CD8-positive, alpha-beta T cell (primary cell): ENCODE measurements at regions of chr9 and their contacts with region 1.

Region 1: GRCh38 chr9:20319641-20320337 is 302.5 kb downstream of the MLLT3 start:
- DNase-seq: peak in 3 of 9 experiments; percentile 8 to 42 (median 34)
- ATAC-seq: peak; percentile 39
- H3K4me3 ChIP-seq: no peak overlapping the region
- H3K4me3 Mint-ChIP-seq: no peak overlapping the region
- H3K27ac ChIP-seq: peak overlapping the region in 1 of 2 experiments; percentile 50
- H3K27ac Mint-ChIP-seq: peak overlapping the region; percentile 82
- H3K4me1 ChIP-seq: peaks cover 58% of the 10 kb centered on the region
- H3K4me1 Mint-ChIP-seq: peaks cover 89% of the 10 kb centered on the region
- H3K27me3 ChIP-seq: no peaks in the 10 kb centered on the region
- H3K27me3 Mint-ChIP-seq: no peaks in the 10 kb centered on the region
- CTCF ChIP-seq: no peak

Region 2: GRCh38 chr9:20043035-20043434 is 276.8 kb before region 1 on chr9:
- CTCF ChIA-PET with region 1: no interaction called
- POLR2A ChIA-PET with region 1: no interaction called
- intact Hi-C with region 1: loop called in 1 of 2 experiments (anchors 5 kb)
- DNase-seq: peak in 2 of 9 experiments; percentile 15 to 44
- ATAC-seq: peak; percentile 69
- H3K4me3 ChIP-seq: peak overlapping the region; percentile 33 to 44
- H3K4me3 Mint-ChIP-seq: peak overlapping the region; percentile 80
- H3K27ac ChIP-seq: peak overlapping the region; percentile 4 to 74
- H3K27ac Mint-ChIP-seq: peak overlapping the region; percentile 84
- H3K4me1 ChIP-seq: peaks cover 22% of the 10 kb centered on the region
- H3K4me1 Mint-ChIP-seq: peaks cover 28% of the 10 kb centered on the region
- H3K27me3 ChIP-seq: no peaks in the 10 kb centered on the region
- H3K27me3 Mint-ChIP-seq: no peaks in the 10 kb centered on the region
- CTCF ChIP-seq: no peak

Region 3: GRCh38 chr9:20300430-20301115 is 19.2 kb before region 1 on chr9:
- CTCF ChIA-PET with region 1: interaction called, 3 read pairs
- POLR2A ChIA-PET with region 1: interaction called, 10 read pairs
- intact Hi-C with region 1: no loop called
- DNase-seq: no peak
- ATAC-seq: no peak
- H3K4me3 ChIP-seq: no peak overlapping the region
- H3K4me3 Mint-ChIP-seq: no peak overlapping the region
- H3K27ac ChIP-seq: no peak overlapping the region
- H3K27ac Mint-ChIP-seq: peak overlapping the region; percentile 73
- H3K4me1 ChIP-seq: peaks cover 19% of the 10 kb centered on the region
- H3K4me1 Mint-ChIP-seq: peaks cover 23% of the 10 kb centered on the region
- H3K27me3 ChIP-seq: no peaks in the 10 kb centered on the region
- H3K27me3 Mint-ChIP-seq: no peaks in the 10 kb centered on the region
- CTCF ChIP-seq: no peak

Region 4: DNA sequence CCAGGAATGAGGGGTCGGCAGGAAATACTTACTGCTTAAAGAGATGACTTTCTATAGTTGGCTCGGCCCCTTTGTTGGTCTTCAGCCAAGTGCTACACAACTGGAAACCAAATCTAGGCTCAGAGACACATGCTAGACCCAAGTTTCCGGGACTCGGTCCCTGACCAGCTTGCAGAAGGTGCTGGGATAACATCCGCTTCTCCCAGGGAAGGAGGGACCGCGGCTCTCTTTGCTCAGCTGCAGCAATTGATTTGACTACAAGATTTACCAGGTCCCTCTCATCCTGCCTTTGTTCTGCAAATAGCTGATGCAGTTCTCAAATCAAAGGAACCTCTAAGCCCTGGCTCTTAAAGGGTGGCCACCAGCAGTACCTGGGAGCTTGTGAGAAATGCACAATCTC is 12.2 kb before region 1 on chr9:
- CTCF ChIA-PET with region 1: interaction called, 7 read pairs
- POLR2A ChIA-PET with region 1: interaction called, 5 read pairs
- intact Hi-C with region 1: loop called in 1 of 2 experiments (anchors 1 kb)
- DNase-seq: no peak
- ATAC-seq: no peak
- H3K4me3 ChIP-seq: no peak overlapping the region
- H3K4me3 Mint-ChIP-seq: no peak overlapping the region
- H3K27ac ChIP-seq: no peak overlapping the region
- H3K27ac Mint-ChIP-seq: no peak overlapping the region
- H3K4me1 ChIP-seq: no peaks in the 10 kb centered on the region
- H3K4me1 Mint-ChIP-seq: peaks cover 2% of the 10 kb centered on the region
- H3K27me3 ChIP-seq: no peaks in the 10 kb centered on the region
- H3K27me3 Mint-ChIP-seq: no peaks in the 10 kb centered on the region
- CTCF ChIP-seq: no peak

Region 5: GRCh38 chr9:20331095-20331685 is 11.4 kb after region 1 on chr9:
- CTCF ChIA-PET with region 1: interaction called, 5 read pairs
- POLR2A ChIA-PET with region 1: interaction called, 12 read pairs
- intact Hi-C with region 1: no loop called
- DNase-seq: no peak
- ATAC-seq: no peak
- H3K4me3 ChIP-seq: no peak overlapping the region
- H3K4me3 Mint-ChIP-seq: no peak overlapping the region
- H3K27ac ChIP-seq: no peak overlapping the region
- H3K27ac Mint-ChIP-seq: no peak overlapping the region
- H3K4me1 ChIP-seq: no peaks in the 10 kb centered on the region
- H3K4me1 Mint-ChIP-seq: peaks cover 13% of the 10 kb centered on the region
- H3K27me3 ChIP-seq: no peaks in the 10 kb centered on the region
- H3K27me3 Mint-ChIP-seq: no peaks in the 10 kb centered on the region
- CTCF ChIP-seq: no peak

Region 6: DNA sequence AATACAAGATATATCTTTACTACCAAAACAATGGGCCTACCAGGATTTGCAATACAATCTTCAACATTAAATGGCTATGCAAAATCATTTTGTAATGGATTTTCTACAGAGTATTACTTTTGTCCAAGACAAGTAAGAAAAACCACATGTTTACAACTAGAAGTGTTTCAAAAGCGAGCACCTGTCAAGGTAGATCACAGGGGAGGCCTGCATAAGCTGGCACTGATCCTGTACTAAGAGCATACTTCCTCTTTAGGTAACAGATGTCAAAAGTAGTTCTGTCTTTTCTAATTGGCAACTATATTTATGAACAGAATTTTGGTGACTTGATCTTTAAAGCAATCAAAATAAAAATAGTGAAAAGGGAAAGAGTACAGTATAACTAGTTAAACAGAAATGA is 53.5 kb after region 1 on chr9:
- CTCF ChIA-PET with region 1: no interaction called
- POLR2A ChIA-PET with region 1: no interaction called
- intact Hi-C with region 1: no loop called
- DNase-seq: no peak
- ATAC-seq: no peak
- H3K4me3 ChIP-seq: no peak overlapping the region
- H3K4me3 Mint-ChIP-seq: no peak overlapping the region
- H3K27ac ChIP-seq: no peak overlapping the region
- H3K27ac Mint-ChIP-seq: peak overlapping the region; percentile 71
- H3K4me1 ChIP-seq: peaks cover 30% of the 10 kb centered on the region
- H3K4me1 Mint-ChIP-seq: peaks cover 75% of the 10 kb centered on the region
- H3K27me3 ChIP-seq: no peaks in the 10 kb centered on the region
- H3K27me3 Mint-ChIP-seq: no peaks in the 10 kb centered on the region
- CTCF ChIP-seq: no peak